ENCODE measurements at regions of chr2 and their contacts with region 1.

Region 1: DNA sequence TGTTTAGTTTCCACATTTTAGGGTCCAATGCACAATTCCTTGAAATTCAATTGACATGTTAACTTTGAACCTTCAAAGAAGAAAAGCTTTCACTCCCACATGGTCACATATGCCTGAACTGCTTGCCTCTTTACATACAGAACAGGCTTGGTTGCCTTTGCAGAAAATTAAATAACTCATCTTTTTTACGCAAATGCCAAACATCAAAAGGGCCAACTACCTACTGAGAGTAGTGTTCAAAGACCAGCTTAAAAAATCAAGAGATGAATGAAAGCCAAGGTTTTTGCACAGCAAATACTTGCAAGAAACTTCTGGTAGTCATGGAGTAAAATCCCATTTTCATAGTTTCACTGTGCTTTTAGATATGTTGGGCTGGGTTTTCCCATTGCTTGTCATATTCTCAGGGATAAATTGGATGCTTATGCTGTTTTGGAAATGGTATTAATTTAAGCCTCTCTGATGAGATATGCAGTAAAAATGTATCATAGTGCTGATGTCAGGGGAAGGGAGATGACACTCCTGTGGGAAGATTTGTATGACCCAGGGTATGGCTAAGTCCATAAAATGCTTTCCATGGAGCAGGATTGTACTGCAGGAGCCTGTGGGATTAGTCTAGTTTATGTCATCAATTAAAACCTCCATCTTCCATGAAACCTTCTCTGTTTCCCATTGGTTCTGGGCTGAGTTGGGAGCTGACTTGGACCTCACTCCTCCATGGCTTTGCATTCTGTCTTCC is 60.6 kb upstream of the DARS1 start:
- DNase-seq: no peak
- H3K4me3 ChIP-seq: no peak overlapping the region
- H3K27ac ChIP-seq: no peak overlapping the region
- H3K4me1 ChIP-seq: peaks cover 4 to 11% (median 7%) of the 10 kb centered on the region in 4 experiments
- H3K27me3 ChIP-seq: no peaks in the 10 kb centered on the region

Region 2: DNA sequence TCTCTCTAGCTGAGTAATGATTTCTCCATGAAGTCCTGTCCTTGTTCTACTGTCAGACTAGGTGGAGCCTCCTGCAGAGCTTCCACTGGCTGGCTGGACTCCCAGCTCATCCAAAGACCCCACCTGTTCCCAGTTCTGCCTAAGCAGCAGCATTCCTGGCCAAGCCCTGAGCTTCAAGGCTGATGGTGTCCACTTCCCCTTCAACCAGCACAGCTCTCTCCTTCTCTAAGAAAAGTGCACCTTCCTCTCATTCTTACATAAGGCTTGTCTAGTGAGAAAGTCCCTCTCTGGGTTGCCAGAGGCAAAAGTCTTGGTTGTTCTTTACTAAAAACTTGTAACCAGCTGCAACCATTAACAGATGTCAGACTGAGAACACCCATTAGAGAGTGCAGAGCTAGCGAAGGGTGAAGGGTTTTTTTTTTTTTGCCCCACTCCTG is 13.1 kb after region 1 on chr2:
- CTCF ChIA-PET with region 1: interaction called, 13 read pairs
- POLR2A ChIA-PET with region 1: no interaction called
- DNase-seq: no peak
- H3K4me3 ChIP-seq: no peak overlapping the region
- H3K27ac ChIP-seq: no peak overlapping the region
- H3K4me1 ChIP-seq: peaks cover 0 to 2% (median under 1%) of the 10 kb centered on the region in 4 experiments
- H3K27me3 ChIP-seq: no peaks in the 10 kb centered on the region